ENCODE measurements at regions of chr2 and their contacts with region 1.

Region 1: GRCh38 chr2:134282629-134283400 is 28.9 kb downstream of the MGAT5 start:
- DNase-seq: peak; percentile 16
- H3K4me3 Mint-ChIP-seq: peak overlapping the region; percentile 20
- H3K27ac Mint-ChIP-seq: peak overlapping the region; percentile 63
- H3K4me1 Mint-ChIP-seq: peaks cover 33% of the 10 kb centered on the region
- H3K27me3 Mint-ChIP-seq: peaks cover 20% of the 10 kb centered on the region

Region 2: GRCh38 chr2:134258684-134259388 is 24.0 kb before region 1 on chr2:
- intact Hi-C with region 1: loop called (anchors 1 kb)
- DNase-seq: peak; percentile 49
- H3K4me3 Mint-ChIP-seq: peak overlapping the region; percentile 6
- H3K27ac Mint-ChIP-seq: no peak overlapping the region
- H3K4me1 Mint-ChIP-seq: peaks cover 45% of the 10 kb centered on the region
- H3K27me3 Mint-ChIP-seq: peaks cover 23% of the 10 kb centered on the region

Region 3: DNA sequence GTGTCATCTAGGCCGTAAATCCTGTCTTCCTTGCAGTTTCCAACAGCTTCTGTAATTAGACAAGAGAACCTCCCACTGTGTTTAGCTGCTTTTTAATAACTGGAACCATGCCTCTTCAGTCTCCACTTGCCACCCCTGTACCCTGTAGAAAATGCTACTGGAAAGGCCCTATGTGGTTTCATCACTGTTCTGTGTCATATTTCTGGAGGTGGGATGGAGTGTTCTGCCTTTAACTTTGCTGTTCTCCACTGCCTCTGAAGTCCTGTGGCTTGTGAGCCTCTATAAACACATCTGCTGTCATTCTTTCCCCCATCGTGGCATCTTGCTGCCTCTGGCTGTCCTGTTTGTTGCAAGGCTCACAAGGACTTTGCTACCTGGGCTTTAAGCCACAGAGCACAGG is 11.1 kb before region 1 on chr2:
- intact Hi-C with region 1: loop called (anchors 1 kb)
- DNase-seq: no peak
- H3K4me3 Mint-ChIP-seq: no peak overlapping the region
- H3K27ac Mint-ChIP-seq: peak overlapping the region; percentile 53
- H3K4me1 Mint-ChIP-seq: peaks cover 19% of the 10 kb centered on the region
- H3K27me3 Mint-ChIP-seq: peaks cover 2% of the 10 kb centered on the region

Region 4: GRCh38 chr2:134301099-134301927 is 18.5 kb after region 1 on chr2:
- intact Hi-C with region 1: loop called (anchors 2 kb)
- DNase-seq: no peak
- H3K4me3 Mint-ChIP-seq: no peak overlapping the region
- H3K27ac Mint-ChIP-seq: no peak overlapping the region
- H3K4me1 Mint-ChIP-seq: peaks cover 16% of the 10 kb centered on the region
- H3K27me3 Mint-ChIP-seq: peaks cover 3% of the 10 kb centered on the region

Region 5: DNA sequence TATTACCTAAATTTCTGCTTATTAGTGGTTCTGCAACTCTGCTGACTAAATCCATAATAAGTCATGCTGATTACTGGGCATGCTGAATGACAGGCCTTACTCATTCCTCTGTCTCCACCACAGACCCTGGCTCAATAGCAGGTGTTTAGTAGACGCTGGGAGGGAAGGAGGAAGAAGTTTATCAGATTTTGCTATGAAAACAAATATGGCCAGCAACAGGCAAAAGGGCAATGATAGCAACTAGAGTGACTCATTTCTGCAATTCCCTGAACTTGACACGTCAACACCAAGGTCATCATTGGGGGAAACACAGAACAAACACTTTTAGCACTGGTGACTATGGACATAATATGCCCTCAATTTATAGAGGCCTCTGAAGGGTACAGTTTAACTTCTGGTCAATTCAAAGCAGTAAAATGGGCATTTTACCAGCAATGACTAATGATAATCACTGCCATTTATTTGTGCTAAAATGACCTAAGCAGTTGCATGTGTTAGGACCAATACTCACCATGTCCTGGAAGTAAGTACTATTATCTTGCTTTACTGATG is 400.8 kb after region 1 on chr2:
- intact Hi-C with region 1: loop called (anchors 10 kb)
- DNase-seq: no peak
- H3K4me3 Mint-ChIP-seq: no peak overlapping the region
- H3K27ac Mint-ChIP-seq: no peak overlapping the region
- H3K4me1 Mint-ChIP-seq: peaks cover 53% of the 10 kb centered on the region
- H3K27me3 Mint-ChIP-seq: peaks cover 12% of the 10 kb centered on the region